ENCODE measurements at regions of chr7 and their contacts with region 1.

Region 1: DNA sequence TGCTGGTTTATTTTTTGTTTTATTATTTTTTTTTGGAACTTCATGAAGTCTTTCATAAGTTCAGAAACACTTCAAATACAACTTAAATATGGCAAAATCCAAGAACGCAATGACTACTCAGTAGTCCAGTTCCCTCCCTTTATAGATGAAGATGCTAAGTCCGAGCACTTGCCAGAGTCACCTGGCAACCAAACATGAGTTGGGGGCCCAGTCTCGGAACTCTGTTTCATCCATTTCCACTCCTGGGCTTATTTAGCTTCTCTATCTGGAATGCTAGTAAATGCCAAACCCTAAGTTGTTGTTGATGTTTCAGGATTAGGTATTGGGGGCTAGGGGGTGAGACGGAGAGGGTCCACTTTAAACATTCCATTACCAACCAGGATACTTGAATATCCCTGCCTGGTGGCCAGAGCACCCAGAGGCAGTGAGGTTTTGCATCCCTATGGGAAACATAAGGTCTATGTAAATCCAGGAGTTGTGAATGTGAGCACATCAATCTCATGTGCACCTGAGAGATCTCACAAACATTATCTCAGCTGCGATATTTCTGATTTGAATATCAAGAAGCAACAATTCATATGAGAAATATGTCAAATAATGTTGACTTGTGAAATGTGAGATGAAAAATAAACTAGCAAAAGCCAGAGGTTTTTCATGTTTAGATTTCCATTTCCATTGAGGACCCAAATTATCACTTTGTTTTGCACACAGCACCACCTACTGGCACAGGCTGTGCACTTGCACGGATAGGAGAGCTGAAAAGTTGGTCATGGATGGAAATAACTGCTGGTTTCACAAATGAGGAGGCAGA is 129.3 kb downstream of the PKD1L1 start:
- DNase-seq: peak; percentile 81
- H3K4me3 ChIP-seq: no peak overlapping the region
- H3K27ac ChIP-seq: peak overlapping the region; percentile 48 to 66; a peak in 3 of 4 replicates
- H3K4me1 ChIP-seq: peaks cover 7 to 14% of the 10 kb centered on the region in 2 experiments; a peak in 2 of 4 replicates
- H3K27me3 ChIP-seq: no peaks in the 10 kb centered on the region
- CTCF ChIP-seq: peak; percentile 100
- EP300 ChIP-seq: no peak
- RAD21 ChIP-seq: peak; percentile 99

Region 2: DNA sequence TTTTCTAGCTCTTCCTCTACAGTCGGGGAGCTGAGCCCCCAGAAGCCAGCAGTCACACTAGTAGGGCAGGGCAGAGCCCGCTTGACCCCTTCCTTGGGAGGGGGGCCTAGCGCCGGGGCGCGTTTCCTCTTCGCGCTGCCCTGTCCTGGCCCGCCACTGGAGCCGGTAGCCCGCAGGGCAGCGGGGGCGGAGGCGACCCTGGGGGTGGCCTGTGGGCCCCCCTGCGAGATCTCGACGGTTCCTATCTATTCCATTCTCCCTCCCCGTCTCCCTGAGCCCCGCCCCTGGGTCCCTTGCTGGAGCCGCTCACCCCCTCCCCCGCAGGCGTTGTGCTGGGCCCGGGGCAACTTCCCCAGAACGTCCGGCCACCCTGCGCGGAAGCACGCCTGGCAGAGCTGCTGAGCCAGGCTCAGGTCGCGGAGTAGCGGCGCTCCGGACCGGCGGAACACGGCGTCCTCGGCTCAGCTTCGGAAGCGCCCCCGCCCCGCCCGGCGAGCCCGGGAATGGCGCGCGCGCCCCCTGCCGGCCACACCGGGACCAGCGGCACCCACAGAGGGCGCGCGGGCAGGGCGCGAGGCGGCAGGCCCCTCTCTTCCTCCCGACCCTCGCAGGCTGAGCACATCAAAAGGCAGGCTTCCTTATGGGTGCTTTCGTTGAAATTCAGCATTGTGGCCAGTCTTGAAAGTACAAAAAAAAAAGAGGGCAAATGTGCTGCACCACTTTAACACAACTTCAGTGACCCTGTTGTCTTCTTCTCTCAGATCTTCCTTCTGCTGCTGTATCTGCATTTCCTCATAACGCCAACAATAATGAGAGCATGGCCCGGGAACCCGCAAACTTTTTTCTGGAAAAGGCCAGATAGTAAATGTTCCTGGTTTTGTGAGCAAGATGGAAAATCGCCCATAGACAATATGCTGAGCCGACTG is 564.7 kb before region 1 on chr7:
- CTCF ChIA-PET with region 1: interaction called, 14 read pairs
- POLR2A ChIA-PET with region 1: no interaction called
- DNase-seq: peak; percentile 98
- H3K4me3 ChIP-seq: peak overlapping the region; percentile 65 to 71
- H3K27ac ChIP-seq: peak overlapping the region; percentile 58 to 62
- H3K4me1 ChIP-seq: peaks cover 4 to 14% of the 10 kb centered on the region in 2 experiments; a peak in 2 of 4 replicates
- H3K27me3 ChIP-seq: no peaks in the 10 kb centered on the region
- CTCF ChIP-seq: peak; percentile 98
- EP300 ChIP-seq: no peak
- RAD21 ChIP-seq: peak; percentile 66

Region 3: DNA sequence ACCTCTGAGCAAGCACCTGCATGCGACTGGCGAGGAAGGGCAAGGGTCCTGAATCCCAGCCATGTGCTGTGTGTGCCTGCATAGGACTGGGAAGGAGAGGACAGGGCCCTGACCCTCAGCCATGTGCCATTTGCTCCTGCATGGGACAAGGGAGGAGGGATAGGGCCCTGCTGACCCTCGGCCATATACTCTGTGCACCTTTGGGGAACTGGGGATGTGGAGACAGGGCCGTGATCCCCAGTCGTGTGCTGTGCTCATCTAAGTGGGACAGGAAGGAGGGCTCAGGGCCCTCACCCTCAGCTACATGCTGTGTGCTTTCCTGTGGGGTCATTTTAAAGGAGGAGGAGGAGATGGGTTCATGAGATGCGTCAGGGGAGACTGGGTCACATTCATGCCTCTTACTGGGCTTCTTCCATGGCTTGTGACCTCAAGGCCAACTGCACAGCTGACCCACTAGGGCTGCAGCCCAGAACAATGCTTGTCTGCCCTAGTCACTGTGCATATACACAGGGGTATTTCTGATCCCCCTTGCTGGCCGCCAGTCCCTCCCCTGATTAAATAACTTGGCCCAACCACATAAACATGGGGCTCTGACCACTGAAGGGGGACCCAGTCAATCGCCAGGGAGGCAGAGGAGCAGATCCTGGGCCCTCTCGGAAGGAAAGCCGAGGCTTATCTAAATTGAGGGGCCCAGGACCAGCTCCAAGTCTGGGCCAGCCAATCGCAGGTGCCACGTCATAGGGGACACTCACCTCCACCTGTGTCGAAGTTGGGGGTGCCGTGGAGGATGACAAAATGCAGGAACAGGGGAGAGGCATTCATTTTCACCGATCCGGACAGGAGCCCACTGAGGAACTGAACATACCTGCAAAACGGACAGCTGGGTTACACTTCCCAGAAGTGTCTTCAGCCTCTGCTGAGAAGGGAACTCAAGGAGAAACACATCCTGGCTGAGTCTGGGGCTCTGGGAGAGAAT is 404.4 kb before region 1 on chr7:
- CTCF ChIA-PET with region 1: no interaction called
- POLR2A ChIA-PET with region 1: no interaction called
- DNase-seq: peak; percentile 11
- H3K4me3 ChIP-seq: no peak overlapping the region
- H3K27ac ChIP-seq: no peak overlapping the region
- H3K4me1 ChIP-seq: no peaks in the 10 kb centered on the region
- H3K27me3 ChIP-seq: no peaks in the 10 kb centered on the region
- CTCF ChIP-seq: no peak
- EP300 ChIP-seq: no peak
- RAD21 ChIP-seq: no peak

Region 4: DNA sequence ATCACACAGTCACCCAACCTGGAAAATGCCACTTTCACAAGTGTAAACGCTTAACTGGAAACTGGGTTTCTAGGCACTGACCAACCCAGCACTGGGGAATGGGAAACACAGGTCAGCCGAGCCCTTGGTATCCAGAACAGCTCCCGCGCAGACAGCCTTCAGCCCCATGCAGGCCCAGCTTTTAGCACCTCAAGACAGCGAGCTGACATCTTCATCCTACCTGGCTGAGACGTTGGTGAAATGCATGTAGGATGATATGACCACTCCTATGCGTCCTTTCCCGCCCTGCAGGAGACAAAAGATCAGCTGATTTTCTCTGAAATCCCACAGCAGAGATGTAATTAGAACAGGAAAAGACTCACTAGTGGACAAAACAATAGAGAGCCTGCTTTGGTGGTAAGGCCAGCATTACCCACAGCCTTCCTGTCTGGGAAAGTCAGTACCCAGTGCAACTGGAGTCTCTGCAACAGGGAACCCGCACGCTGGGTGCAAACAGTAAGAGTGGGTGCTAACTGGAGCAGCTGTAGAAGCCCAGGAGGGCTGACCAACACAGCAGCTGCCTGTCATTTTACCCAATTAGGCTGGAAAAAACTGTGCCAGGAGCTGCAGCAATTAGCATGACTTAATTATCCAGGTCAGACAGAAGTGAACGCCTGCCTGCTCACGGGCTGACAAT is 390.8 kb before region 1 on chr7:
- CTCF ChIA-PET with region 1: interaction called, 14 read pairs
- POLR2A ChIA-PET with region 1: no interaction called
- DNase-seq: peak; percentile 70
- H3K4me3 ChIP-seq: no peak overlapping the region
- H3K27ac ChIP-seq: peak overlapping the region in 1 of 2 experiments; percentile 90; a peak in 2 of 4 replicates
- H3K4me1 ChIP-seq: peaks cover 0 to 20% of the 10 kb centered on the region in 2 experiments; a peak in 2 of 4 replicates
- H3K27me3 ChIP-seq: no peaks in the 10 kb centered on the region
- CTCF ChIP-seq: no peak
- EP300 ChIP-seq: peak in 1 of 2 experiments; percentile 94; a peak in 2 of 4 replicates
- RAD21 ChIP-seq: no peak; the same call in 1 of the 2 replicates

Region 5: GRCh38 chr7:47453093-47454049 is 365.6 kb before region 1 on chr7:
- CTCF ChIA-PET with region 1: interaction called, 21 read pairs
- POLR2A ChIA-PET with region 1: no interaction called
- DNase-seq: no peak
- H3K4me3 ChIP-seq: 0 out of 4 replicates have a peak overlapping the region, but pooled peaks of 1 of the 2 experiments have one; percentile 0
- H3K27ac ChIP-seq: peak overlapping the region; percentile 78 to 89
- H3K4me1 ChIP-seq: peaks cover 39 to 47% of the 10 kb centered on the region in 2 experiments
- H3K27me3 ChIP-seq: no peaks in the 10 kb centered on the region
- CTCF ChIP-seq: no peak
- EP300 ChIP-seq: peak in 1 of 2 experiments; percentile 51; a peak in 1 of 4 replicates
- RAD21 ChIP-seq: no peak

Region 6: GRCh38 chr7:47571331-47572093 is 247.5 kb before region 1 on chr7:
- CTCF ChIA-PET with region 1: interaction called, 12 read pairs
- POLR2A ChIA-PET with region 1: no interaction called
- DNase-seq: peak; percentile 64
- H3K4me3 ChIP-seq: no peak overlapping the region; a peak in 1 of 4 replicates
- H3K27ac ChIP-seq: peak overlapping the region; percentile 71 to 95
- H3K4me1 ChIP-seq: peaks cover 33 to 53% of the 10 kb centered on the region in 2 experiments; a peak in 3 of 4 replicates
- H3K27me3 ChIP-seq: no peaks in the 10 kb centered on the region
- CTCF ChIP-seq: 0 out of 2 replicates have a peak, but pooled peaks have one; percentile 6
- EP300 ChIP-seq: peak in 1 of 2 experiments; percentile 59; a peak in 1 of 4 replicates
- RAD21 ChIP-seq: peak; percentile 18; the same call in 1 of the 2 replicates

Region 7: DNA sequence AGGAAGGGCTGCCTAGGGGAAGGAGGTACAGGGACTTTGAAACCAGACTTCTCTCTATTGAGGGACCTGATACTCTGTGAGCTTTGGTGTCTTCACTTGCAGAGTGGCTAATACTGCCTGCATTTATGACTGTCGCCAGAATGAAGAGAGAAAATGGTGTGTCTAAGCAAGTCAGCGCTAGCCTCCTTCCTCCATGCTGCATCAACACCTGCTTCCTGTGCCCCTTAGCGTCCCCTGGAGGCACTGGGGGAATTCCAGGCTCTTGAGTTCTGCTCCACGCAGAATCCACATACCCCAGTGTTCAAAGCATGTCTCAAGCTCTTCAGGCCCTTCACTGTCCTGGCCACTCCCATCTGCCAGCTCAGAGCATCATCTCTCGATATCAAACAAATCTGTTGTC is 11.2 kb before region 1 on chr7:
- CTCF ChIA-PET with region 1: interaction called, 55 read pairs
- POLR2A ChIA-PET with region 1: no interaction called
- DNase-seq: no peak
- H3K4me3 ChIP-seq: no peak overlapping the region
- H3K27ac ChIP-seq: no peak overlapping the region
- H3K4me1 ChIP-seq: peaks cover 0 to 27% of the 10 kb centered on the region in 2 experiments; a peak in 1 of 4 replicates
- H3K27me3 ChIP-seq: no peaks in the 10 kb centered on the region
- CTCF ChIP-seq: no peak
- EP300 ChIP-seq: no peak
- RAD21 ChIP-seq: no peak

Region 8: DNA sequence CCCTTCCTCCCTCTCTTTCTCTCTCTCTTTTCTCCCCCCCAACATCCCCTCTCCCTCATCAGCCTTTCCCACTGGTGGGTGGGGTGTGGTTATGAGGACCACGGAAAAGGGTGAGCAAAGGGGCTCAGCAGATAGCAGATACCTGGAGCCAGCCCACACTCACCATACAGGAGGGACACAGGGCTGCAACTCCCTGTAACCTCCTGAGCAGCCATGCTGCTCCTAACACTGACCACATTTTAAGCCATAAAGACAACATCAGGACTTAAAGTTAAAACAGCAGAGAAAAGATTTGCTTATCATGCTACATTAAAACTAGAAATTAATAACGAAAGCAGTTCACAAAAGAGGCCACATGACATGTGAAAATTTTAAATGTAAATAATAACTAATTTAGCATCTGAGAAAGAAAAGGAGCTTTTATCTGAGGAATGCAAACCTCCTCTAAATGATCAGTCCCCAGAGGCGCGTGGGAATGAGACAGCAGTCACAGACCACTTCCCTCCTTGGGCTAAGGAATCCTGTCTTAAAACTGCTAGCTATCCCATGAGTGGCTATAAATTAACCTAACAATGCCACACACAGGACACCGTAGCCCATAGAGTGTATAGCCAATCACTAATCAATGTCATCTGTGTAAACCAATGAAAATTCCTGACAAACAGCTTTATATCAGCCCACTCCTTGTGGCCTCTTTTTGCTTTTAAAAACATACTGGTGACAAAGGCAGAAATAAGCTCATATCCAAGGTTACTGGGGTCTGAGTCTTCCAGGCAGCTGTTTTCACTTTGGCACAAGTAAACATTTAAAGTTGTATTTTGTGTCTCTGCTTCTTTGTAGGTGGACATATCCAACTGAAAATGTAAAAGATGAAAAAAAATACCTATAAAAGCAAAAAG is 96.0 kb after region 1 on chr7:
- CTCF ChIA-PET with region 1: no interaction called
- POLR2A ChIA-PET with region 1: no interaction called
- DNase-seq: no peak
- H3K4me3 ChIP-seq: no peak overlapping the region
- H3K27ac ChIP-seq: no peak overlapping the region
- H3K4me1 ChIP-seq: no peaks in the 10 kb centered on the region; a peak in 1 of 4 replicates
- H3K27me3 ChIP-seq: no peaks in the 10 kb centered on the region
- CTCF ChIP-seq: no peak
- EP300 ChIP-seq: no peak
- RAD21 ChIP-seq: no peak

Region 9: DNA sequence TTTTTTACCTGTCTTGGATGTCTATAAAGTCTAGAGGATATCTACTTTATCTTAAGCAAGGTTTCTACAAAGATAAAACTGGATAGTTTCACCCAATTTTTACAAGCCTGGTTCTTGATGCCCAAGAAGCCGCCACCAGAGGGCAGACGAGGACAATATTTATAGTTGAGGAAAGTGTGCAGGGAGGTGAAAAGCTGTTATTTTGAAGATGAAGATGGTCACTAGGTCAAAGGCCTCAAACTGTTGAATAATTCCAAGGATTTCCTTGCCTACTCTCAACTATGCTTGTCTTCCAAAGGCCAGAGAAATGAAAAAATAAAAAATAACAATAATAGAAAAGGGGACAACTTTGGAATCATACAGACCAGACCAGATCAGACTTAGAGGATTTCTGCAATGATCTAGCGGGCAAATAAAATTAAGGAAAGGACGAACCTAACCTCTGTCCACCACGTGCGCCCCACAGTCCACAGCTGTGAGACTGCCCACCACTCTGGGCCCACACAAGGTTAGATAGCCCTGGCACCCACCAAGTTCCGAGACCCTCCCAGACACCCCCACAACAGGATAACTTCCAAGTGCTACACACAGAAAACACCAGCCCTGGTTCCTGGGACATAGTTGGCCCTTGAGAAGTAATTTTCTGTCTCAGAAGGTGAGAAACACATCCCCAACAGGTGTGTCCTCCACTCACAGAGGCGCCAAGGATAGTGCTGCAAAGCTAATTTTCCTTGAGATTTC is 126.4 kb after region 1 on chr7:
- CTCF ChIA-PET with region 1: interaction called, 11 read pairs
- POLR2A ChIA-PET with region 1: no interaction called
- DNase-seq: peak; percentile 74
- H3K4me3 ChIP-seq: no peak overlapping the region
- H3K27ac ChIP-seq: no peak overlapping the region
- H3K4me1 ChIP-seq: peaks cover 24 to 35% of the 10 kb centered on the region in 2 experiments
- H3K27me3 ChIP-seq: no peaks in the 10 kb centered on the region
- CTCF ChIP-seq: peak; percentile 99
- EP300 ChIP-seq: no peak
- RAD21 ChIP-seq: peak; percentile 93

Region 10: GRCh38 chr7:48052748-48053147 is 233.7 kb after region 1 on chr7:
- CTCF ChIA-PET with region 1: no interaction called
- POLR2A ChIA-PET with region 1: no interaction called
- DNase-seq: no peak
- H3K4me3 ChIP-seq: no peak overlapping the region
- H3K27ac ChIP-seq: no peak overlapping the region
- H3K4me1 ChIP-seq: no peaks in the 10 kb centered on the region
- H3K27me3 ChIP-seq: no peaks in the 10 kb centered on the region
- CTCF ChIP-seq: no peak
- EP300 ChIP-seq: peak in 1 of 2 experiments; percentile 21; a peak in 1 of 4 replicates
- RAD21 ChIP-seq: no peak

Measured in SK-N-SH (cell line).